CD4-positive, alpha-beta memory T cell (primary cell): ENCODE measurements at regions of chr20 and their contacts with region 1.

Region 1: DNA sequence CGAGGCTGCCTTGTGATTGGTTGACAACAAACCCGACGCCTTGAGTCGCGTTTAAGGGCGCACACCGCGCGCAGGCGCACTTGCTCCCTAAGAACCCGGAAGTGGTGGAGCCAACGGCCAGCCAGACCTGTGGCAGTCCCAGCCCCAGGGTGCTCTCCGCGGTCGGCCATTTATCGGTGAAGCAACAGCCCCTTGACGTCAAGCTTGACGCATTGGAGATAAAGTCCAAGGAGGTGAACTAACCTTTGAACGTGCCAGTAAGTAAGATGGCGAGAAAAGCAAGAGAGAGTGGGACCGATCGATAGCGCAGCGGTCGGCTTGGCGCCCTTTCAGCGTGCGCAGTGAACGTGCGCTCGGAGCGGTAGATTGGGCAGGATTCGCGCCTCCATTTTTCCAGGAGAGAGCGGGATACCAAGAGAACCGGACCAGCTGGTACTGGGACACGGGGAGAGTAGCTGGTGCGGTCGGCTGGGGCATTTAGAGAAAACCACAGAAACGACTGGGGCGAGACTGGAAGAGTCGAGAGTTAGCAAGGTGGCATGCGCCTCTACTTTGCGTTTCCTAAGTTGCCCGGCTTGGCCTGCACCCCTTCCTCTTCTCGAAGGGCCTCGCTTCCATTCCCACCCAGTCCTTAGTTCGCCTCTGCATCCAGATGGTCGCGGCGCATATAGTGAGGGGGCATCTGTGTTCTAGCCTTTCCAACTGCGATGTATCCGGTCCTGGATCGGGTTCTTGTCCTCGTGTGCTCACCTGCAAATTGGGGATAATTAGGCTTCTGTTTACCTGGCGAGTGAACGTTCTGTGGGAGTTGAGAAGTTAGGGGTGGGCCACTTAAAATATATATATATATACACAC is at the start of gene CSTF1:
- DNase-seq: peak; percentile 99 to 100 (median 99)
- H3K4me3 ChIP-seq: peak within 1 kb of the TSS; percentile 100
- H3K4me3 Mint-ChIP-seq: no peak within 1 kb of the TSS
- H3K27ac ChIP-seq: peak within 1 kb of the TSS; percentile 91
- H3K27ac Mint-ChIP-seq: peak within 1 kb of the TSS in 1 of 7 donors; percentile 96
- H3K4me1 ChIP-seq: peaks cover 34% of the 10 kb centered on the region
- H3K4me1 Mint-ChIP-seq: peaks cover 25 to 28% (median 28%) of the 10 kb centered on the region in 4 donors
- H3K27me3 ChIP-seq: no peaks in the 10 kb centered on the region
- H3K27me3 Mint-ChIP-seq: no peaks in the 10 kb centered on the region
- total RNA-seq, gene CSTF1: 50.1 to 55.3 TPM

Region 2: DNA sequence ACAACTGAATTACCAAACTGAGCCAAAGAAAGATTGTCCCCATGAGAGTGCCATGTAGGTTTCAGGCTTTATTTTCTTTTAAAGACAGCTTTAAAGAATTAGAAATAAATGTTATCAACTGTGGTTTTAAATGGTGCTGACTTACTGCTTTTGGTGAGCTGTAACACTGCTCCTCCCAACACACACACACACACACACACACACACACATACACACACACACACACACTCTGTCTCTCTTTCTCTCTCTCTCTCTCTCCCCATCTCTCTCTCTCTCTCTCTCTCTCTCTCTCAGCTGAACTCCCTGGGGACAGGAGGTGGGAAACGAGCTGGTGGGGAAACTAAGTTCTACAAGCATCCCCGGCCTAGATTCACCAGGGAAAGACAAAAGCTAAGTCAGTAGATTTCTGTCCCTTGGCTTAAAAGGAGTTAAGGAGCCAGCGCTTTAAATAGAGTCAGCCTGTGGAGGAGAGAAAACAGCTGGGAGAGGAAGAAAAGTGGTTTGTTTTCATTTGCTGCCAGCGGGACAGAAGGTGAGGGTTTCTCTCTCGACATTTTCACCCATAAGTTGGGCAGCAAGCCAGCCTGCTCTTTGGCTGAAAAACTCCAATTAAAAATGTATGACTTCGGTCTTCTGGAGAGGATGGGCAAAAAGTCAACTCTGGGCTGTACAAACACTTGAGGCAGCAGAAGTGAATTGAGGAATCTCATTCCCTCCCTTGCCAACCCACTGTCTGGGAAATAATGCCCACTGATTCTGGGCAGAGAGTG is 414.6 kb before region 1 on chr20:
- CTCF ChIA-PET with region 1: no interaction called
- POLR2A ChIA-PET with region 1: no interaction called
- intact Hi-C with region 1: no loop called
- DNase-seq: no peak
- H3K4me3 ChIP-seq: no peak overlapping the region
- H3K4me3 Mint-ChIP-seq: no peak overlapping the region
- H3K27ac ChIP-seq: no peak overlapping the region
- H3K27ac Mint-ChIP-seq: no peak overlapping the region
- H3K4me1 ChIP-seq: no peaks in the 10 kb centered on the region
- H3K4me1 Mint-ChIP-seq: no peaks in the 10 kb centered on the region
- H3K27me3 ChIP-seq: no peaks in the 10 kb centered on the region
- H3K27me3 Mint-ChIP-seq: no peaks in the 10 kb centered on the region

Region 3: DNA sequence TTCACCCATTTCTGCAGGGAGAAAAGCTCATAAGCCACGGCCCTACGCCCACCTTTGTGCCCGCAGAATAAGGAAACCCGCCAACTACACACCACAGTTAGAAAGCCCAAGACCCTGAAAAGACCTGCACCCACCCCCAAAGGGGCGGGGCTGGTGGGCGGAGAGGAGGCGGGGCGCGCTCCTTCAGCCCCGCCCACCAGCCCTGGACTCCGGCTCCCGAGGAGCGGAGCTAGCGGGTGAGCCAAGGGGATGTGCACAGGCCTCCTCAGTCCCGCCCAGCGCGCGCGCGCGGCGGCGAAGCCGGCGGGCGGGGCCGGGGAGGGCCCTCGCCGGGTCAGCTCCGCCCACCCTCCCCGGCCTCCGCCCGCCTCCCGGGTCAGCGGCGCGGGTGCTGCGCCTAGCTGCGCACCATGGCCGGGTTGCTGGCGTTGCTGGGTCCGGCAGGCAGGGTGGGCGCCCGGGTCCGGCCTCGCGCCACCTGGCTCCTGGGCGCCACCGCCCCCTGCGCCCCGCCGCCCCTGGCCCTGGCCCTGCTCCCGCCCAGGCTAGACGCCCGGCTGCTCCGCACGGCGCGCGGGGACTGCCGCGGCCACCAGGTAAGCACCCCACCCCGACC is 33.8 kb before region 1 on chr20 and contains the start of gene FAM210B:
- CTCF ChIA-PET with region 1: interaction called, 10 read pairs
- POLR2A ChIA-PET with region 1: interaction called, 47 read pairs
- intact Hi-C with region 1: loop called (anchors 1 kb)
- DNase-seq: peak; percentile 80 to 85 (median 82)
- H3K4me3 ChIP-seq: peak within 1 kb of the TSS; percentile 52 to 81
- H3K4me3 Mint-ChIP-seq: peak within 1 kb of the TSS; percentile 90 to 94 (median 92)
- H3K27ac ChIP-seq: peak within 1 kb of the TSS; percentile 49
- H3K27ac Mint-ChIP-seq: peak within 1 kb of the TSS; percentile 29 to 88 (median 86)
- H3K4me1 ChIP-seq: peaks cover 12% of the 10 kb centered on the region
- H3K4me1 Mint-ChIP-seq: peaks cover 10 to 36% (median 25%) of the 10 kb centered on the region in 4 donors
- H3K27me3 ChIP-seq: no peaks in the 10 kb centered on the region
- H3K27me3 Mint-ChIP-seq: no peaks in the 10 kb centered on the region
- total RNA-seq, gene FAM210B: 28.7 to 32.0 TPM

Region 4: DNA sequence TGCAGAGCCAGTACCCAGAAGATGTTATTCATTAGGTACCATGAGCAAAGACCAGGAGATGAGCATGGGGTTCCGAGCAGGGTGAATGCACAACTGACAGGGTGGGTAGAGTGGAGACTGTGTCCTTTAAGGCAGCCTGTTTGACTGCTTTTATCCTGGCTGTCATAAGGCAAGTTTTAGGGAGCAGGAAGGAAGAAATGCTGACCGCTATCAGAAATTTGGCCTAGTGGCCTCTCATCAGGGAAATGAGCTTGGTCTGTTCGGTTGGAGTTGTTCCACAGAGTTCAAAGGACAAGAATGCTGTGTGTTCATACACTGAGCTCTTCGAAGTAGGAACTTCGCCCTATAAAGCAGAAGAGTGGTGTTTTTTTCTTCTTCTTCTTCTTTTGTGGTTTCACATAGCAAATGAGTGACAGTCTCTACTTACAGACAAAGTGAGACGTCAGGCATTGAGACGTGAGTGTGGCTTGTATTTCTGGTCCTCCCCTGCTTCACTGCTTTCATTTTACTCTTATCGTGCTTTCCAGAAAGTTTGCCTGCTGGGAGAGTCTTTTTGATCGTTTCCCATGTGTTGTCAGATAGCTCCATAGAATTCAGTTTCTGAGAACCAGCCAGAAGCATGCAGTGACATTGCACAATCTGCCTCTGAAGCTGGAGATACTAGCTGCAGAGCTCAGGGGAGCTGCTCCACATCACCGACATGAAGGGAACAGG is 19.4 kb after region 1 on chr20 and contains the start of gene CASS4:
- CTCF ChIA-PET with region 1: interaction called, 9 read pairs
- POLR2A ChIA-PET with region 1: interaction called, 58 read pairs
- intact Hi-C with region 1: loop called (anchors 1 kb)
- DNase-seq: peak; percentile 63 to 74 (median 68)
- H3K4me3 ChIP-seq: peak within 1 kb of the TSS; percentile 24 to 67
- H3K4me3 Mint-ChIP-seq: peak within 1 kb of the TSS; percentile 90 to 98 (median 94)
- H3K27ac ChIP-seq: peak within 1 kb of the TSS; percentile 80
- H3K27ac Mint-ChIP-seq: peak within 1 kb of the TSS; percentile 94 to 99 (median 98)
- H3K4me1 ChIP-seq: peaks cover 59% of the 10 kb centered on the region
- H3K4me1 Mint-ChIP-seq: peaks cover 33 to 66% (median 48%) of the 10 kb centered on the region in 4 donors
- H3K27me3 ChIP-seq: no peaks in the 10 kb centered on the region
- H3K27me3 Mint-ChIP-seq: no peaks in the 10 kb centered on the region
- total RNA-seq, gene CASS4: 10.8 to 10.9 TPM

Region 5: DNA sequence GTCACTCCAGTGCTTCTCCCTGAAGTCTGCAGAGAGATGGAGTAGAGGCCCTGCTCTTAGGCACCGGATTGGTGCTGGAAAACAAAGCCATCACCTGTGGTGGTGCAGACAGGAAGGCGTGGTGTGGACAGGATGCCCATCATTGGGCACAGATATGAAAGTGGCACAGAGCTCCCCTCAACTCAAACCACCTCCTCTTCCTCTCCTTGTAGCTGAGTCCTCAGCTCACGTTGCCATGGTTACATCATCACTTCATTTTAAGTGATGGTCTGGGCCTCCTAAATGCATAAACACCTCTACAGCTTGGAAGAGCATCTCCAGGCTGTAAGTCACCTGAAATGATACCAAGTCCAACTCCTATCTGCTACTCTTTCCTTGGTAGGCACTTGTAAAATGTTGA is 67.9 kb after region 1 on chr20:
- CTCF ChIA-PET with region 1: interaction called, 5 read pairs
- POLR2A ChIA-PET with region 1: interaction called, 3 read pairs
- intact Hi-C with region 1: loop called (anchors 2 kb)
- DNase-seq: peak; percentile 75 to 88 (median 85)
- H3K4me3 ChIP-seq: no peak overlapping the region
- H3K4me3 Mint-ChIP-seq: peak overlapping the region in 5 of 8 donors; percentile 55 to 69 (median 56)
- H3K27ac ChIP-seq: peak overlapping the region; percentile 62
- H3K27ac Mint-ChIP-seq: peak overlapping the region; percentile 91 to 97 (median 96)
- H3K4me1 ChIP-seq: peaks cover 51% of the 10 kb centered on the region
- H3K4me1 Mint-ChIP-seq: peaks cover 26 to 64% (median 43%) of the 10 kb centered on the region in 4 donors
- H3K27me3 ChIP-seq: no peaks in the 10 kb centered on the region
- H3K27me3 Mint-ChIP-seq: no peaks in the 10 kb centered on the region

Region 6: GRCh38 chr20:56540420-56540819 is 147.9 kb after region 1 on chr20:
- CTCF ChIA-PET with region 1: no interaction called
- POLR2A ChIA-PET with region 1: no interaction called
- intact Hi-C with region 1: no loop called
- DNase-seq: no peak
- H3K4me3 ChIP-seq: no peak overlapping the region
- H3K4me3 Mint-ChIP-seq: no peak overlapping the region
- H3K27ac ChIP-seq: no peak overlapping the region
- H3K27ac Mint-ChIP-seq: no peak overlapping the region
- H3K4me1 ChIP-seq: no peaks in the 10 kb centered on the region
- H3K4me1 Mint-ChIP-seq: peaks cover 0 to 3% (median 0%) of the 10 kb centered on the region in 4 donors
- H3K27me3 ChIP-seq: no peaks in the 10 kb centered on the region
- H3K27me3 Mint-ChIP-seq: no peaks in the 10 kb centered on the region

Region 7: GRCh38 chr20:58388882-58389323 is 1996.4 kb after region 1 on chr20 and contains the start of gene VAPB:
- CTCF ChIA-PET with region 1: no interaction called
- POLR2A ChIA-PET with region 1: interaction called, 5 read pairs
- intact Hi-C with region 1: loop called (anchors 2 kb)
- DNase-seq: peak; percentile 94 to 98 (median 97)
- H3K4me3 ChIP-seq: peak within 1 kb of the TSS; percentile 47 to 58
- H3K4me3 Mint-ChIP-seq: peak within 1 kb of the TSS; percentile 94 to 97 (median 94)
- H3K27ac ChIP-seq: peak within 1 kb of the TSS; percentile 98
- H3K27ac Mint-ChIP-seq: peak within 1 kb of the TSS; percentile 78 to 99 (median 99)
- H3K4me1 ChIP-seq: peaks cover 46% of the 10 kb centered on the region
- H3K4me1 Mint-ChIP-seq: peaks cover 29 to 43% (median 38%) of the 10 kb centered on the region in 4 donors
- H3K27me3 ChIP-seq: no peaks in the 10 kb centered on the region
- H3K27me3 Mint-ChIP-seq: peaks cover 0 to 3% of the 10 kb centered on the region in 2 donors
- total RNA-seq, gene VAPB: 37.6 to 40.1 TPM